ENCODE measurements at regions of chr17 and their contacts with region 1.

Region 1: GRCh38 chr17:49434821-49435670 is 20.4 kb upstream of the PHB1 start:
- H3K4me3 ChIP-seq: no peak overlapping the region
- H3K27ac ChIP-seq: no peak overlapping the region
- H3K4me1 ChIP-seq: no peaks in the 10 kb centered on the region
- CTCF ChIP-seq: peak; percentile 39; the same call in 1 of the 2 replicates

Region 2: DNA sequence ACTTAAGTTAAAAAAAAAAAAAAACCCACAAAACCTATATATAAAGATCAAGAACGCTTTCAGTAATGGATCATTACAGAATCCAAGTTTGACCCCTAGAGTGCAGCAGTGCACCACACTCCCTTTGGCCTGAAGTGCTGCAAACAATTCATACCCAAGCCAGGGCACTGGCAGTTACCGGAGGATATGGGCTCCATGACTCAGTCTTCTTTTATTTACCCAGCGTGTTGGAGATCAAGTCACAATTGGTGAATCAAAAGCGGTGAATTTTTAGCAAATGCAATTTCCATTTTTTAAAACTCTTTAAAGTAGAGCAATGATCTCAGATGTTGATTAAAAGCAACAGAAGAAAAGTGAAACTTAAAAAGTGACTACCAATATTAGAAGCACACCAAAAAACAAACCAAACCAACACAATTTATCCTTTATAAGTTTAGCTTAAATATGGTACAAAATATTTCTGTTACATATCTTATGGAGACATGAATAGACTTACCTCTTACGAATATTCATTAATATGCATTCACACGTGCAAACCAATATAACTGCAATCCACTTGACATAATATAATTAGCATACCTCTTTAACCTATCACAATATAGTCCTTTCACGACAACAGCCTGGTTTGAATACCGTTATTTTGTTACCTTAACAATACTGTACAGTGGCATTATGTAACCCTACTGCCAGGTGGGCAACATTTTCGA is 119.3 kb before region 1 on chr17:
- CTCF ChIA-PET with region 1: interaction called, 12 read pairs
- POLR2A ChIA-PET with region 1: no interaction called
- H3K4me3 ChIP-seq: no peak overlapping the region
- H3K27ac ChIP-seq: no peak overlapping the region
- H3K4me1 ChIP-seq: peaks cover 4% of the 10 kb centered on the region; the same call in 1 of the 2 replicates
- CTCF ChIP-seq: peak; percentile 84

Region 3: GRCh38 chr17:49393491-49394255 is 41.4 kb before region 1 on chr17:
- CTCF ChIA-PET with region 1: no interaction called
- POLR2A ChIA-PET with region 1: no interaction called
- H3K4me3 ChIP-seq: no peak overlapping the region
- H3K27ac ChIP-seq: no peak overlapping the region
- H3K4me1 ChIP-seq: peaks cover 13% of the 10 kb centered on the region
- CTCF ChIP-seq: no peak

Region 4: GRCh38 chr17:49414622-49415350 is 20.3 kb before region 1 on chr17 and contains the start of gene PHB1:
- CTCF ChIA-PET with region 1: interaction called, 21 read pairs
- POLR2A ChIA-PET with region 1: interaction called, 4 read pairs
- H3K4me3 ChIP-seq: peak within 1 kb of the TSS; percentile 94
- H3K27ac ChIP-seq: peak within 1 kb of the TSS; percentile 45; the same call in 1 of the 2 replicates
- H3K4me1 ChIP-seq: peaks cover 7% of the 10 kb centered on the region; the same call in 1 of the 2 replicates
- CTCF ChIP-seq: no peak

Region 5: DNA sequence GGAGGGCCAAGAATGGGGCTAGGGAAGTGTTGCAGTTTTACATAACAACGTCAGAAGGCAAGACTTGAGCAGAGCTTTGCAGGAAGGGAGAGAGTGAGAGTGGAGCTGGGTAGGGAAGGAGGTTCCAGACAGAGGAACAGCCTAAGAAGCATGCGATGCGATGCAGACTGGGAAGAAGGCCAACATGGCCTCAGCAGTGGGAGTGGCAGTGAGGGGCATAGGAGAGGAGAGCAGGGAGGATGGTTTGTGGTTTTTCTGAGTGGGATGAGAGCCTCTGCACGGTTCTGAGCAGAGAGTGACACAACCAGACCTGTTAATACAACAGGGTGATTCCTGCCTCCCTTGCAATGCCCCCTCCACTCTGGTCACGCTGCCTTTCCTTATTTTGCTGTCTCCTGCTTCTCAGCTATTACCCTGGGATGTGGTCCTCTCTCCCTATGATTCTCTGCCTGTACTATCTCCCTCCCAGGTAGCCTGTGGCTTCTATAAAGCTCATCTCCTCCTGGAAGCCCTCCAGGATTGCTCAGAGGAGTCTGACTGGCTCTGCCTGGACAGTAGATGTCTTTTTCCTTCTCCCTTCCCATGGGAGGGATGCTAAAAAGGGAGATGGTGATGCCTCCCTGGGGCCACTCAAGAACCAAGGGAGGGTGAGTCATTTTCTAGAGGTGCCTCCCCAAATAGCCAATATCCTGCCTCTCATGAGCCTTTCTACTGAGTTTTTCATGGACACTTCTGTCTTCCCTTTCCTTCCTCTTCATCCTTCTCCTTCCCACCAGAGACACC is 21.3 kb after region 1 on chr17:
- CTCF ChIA-PET with region 1: interaction called, 30 read pairs
- POLR2A ChIA-PET with region 1: no interaction called
- H3K4me3 ChIP-seq: no peak overlapping the region
- H3K27ac ChIP-seq: no peak overlapping the region
- H3K4me1 ChIP-seq: no peaks in the 10 kb centered on the region; the same call in 1 of the 2 replicates
- CTCF ChIP-seq: no peak

Region 6: GRCh38 chr17:49515196-49515770 is 80.2 kb after region 1 on chr17:
- CTCF ChIA-PET with region 1: interaction called, 12 read pairs
- POLR2A ChIA-PET with region 1: interaction called, 4 read pairs
- H3K4me3 ChIP-seq: no peak overlapping the region
- H3K27ac ChIP-seq: peak overlapping the region; percentile 38
- H3K4me1 ChIP-seq: no peaks in the 10 kb centered on the region; the same call in 1 of the 2 replicates
- CTCF ChIP-seq: no peak; the same call in 1 of the 2 replicates

Measured in HEK293 (cell line).